ENCODE measurements at regions of chr17 and their contacts with region 1.

Region 1: DNA sequence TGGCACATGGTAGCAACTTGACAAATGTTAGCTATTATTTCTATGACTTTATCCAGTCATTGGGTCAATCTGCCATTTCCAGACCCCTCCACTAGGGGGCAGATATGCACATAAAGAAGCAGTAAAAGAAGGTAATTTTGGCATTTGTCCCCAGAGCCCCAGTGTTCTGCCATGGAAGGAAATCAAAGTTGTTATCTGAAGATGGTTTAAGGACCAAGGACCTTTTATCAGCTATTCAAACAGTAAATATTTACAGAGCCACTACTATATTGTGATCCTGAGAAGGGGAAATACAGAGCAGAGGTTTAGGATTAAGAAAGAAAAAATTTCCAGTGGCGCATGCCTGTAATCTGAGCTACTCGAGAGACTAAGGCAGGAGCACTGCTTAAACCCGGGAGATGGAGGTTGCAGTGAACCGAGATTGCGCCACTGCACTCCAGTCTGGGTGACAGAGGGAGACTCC is 20.0 kb downstream of the TRAF4 start:
- DNase-seq: peak; percentile 31 to 84 (median 70)
- ATAC-seq: peak; percentile 61 to 82 (median 75)
- H3K4me3 ChIP-seq: no peak overlapping the region
- H3K4me3 Mint-ChIP-seq: no peak overlapping the region
- H3K27ac ChIP-seq: no peak overlapping the region
- H3K27ac Mint-ChIP-seq: peak overlapping the region; percentile 53 to 73
- H3K4me1 ChIP-seq: no peaks in the 10 kb centered on the region
- H3K4me1 Mint-ChIP-seq: peaks cover 3 to 6% (median 4%) of the 10 kb centered on the region in 3 donors
- H3K27me3 ChIP-seq: no peaks in the 10 kb centered on the region
- H3K27me3 Mint-ChIP-seq: no peaks in the 10 kb centered on the region

Region 2: GRCh38 chr17:28720247-28720996 is 43.4 kb before region 1 on chr17:
- CTCF ChIA-PET with region 1: interaction called in 1 of 2 experiments, 11 read pairs
- POLR2A ChIA-PET with region 1: interaction called in 1 of 2 experiments, 5 read pairs
- DNase-seq: peak in 2 of 35 experiments; percentile 23 to 54
- ATAC-seq: no peak
- H3K4me3 ChIP-seq: peak overlapping the region; percentile 77 to 86
- H3K4me3 Mint-ChIP-seq: peak overlapping the region; percentile 97 to 99 (median 98)
- H3K27ac ChIP-seq: peak overlapping the region; percentile 75
- H3K27ac Mint-ChIP-seq: peak overlapping the region; percentile 97 to 98
- H3K4me1 ChIP-seq: peaks cover 21 to 64% of the 10 kb centered on the region in 2 experiments
- H3K4me1 Mint-ChIP-seq: peaks cover 61 to 64% (median 62%) of the 10 kb centered on the region in 3 donors
- H3K27me3 ChIP-seq: peaks cover 0 to 29% of the 10 kb centered on the region in 2 experiments
- H3K27me3 Mint-ChIP-seq: peaks cover 3 to 23% of the 10 kb centered on the region in 2 donors

Region 3: DNA sequence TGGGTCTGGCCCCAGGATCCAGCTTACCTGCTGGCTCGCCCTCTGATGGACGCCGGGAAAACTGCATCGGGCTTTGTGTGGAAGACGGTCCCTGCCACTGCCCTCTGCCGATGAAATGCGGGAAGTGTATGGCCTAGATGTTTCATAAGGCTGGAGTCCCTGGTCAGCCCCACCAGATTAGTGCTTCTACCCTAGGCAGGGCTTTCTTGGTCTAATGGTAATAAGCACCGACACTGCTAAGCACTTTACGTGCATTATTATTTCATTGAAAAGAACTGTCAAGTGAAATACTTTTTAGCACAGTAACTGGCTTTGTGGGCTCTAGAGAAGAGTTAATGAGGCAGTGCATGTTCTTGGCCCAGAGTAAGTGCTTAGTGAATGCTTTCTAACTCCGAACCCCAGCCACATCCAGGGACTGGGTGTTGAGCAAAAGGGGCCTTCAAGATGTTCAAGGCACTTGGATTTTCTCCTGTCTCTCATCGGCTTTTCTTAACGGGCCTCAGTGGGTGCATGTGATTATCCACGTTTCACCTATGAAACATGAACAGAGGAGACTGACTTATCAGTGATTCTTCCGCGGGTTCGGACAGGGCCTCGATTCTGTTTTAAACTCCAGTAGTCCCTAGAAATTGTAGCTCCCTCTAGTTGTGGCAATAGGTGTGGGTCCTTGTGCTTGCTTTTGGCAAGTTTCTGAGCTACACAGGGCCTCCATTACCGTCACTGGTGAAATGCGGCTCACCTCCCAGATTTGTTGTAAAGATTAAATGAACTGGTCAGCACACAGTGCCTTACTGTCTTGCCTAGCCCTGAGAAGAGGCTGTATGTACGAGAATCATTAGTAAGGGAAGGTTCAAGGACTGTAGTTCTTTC is 13.4 kb before region 1 on chr17:
- CTCF ChIA-PET with region 1: interaction called, 4 to 10 read pairs
- POLR2A ChIA-PET with region 1: interaction called in 1 of 2 experiments, 4 read pairs
- DNase-seq: peak; percentile 66 to 94 (median 83)
- ATAC-seq: peak; percentile 82 to 92 (median 86)
- H3K4me3 ChIP-seq: no peak overlapping the region
- H3K4me3 Mint-ChIP-seq: no peak overlapping the region
- H3K27ac ChIP-seq: no peak overlapping the region
- H3K27ac Mint-ChIP-seq: peak overlapping the region in 1 of 2 donors; percentile 58
- H3K4me1 ChIP-seq: peaks cover 9 to 25% of the 10 kb centered on the region in 2 experiments
- H3K4me1 Mint-ChIP-seq: peaks cover 5 to 20% (median 20%) of the 10 kb centered on the region in 3 donors
- H3K27me3 ChIP-seq: no peaks in the 10 kb centered on the region
- H3K27me3 Mint-ChIP-seq: no peaks in the 10 kb centered on the region

Region 4: GRCh38 chr17:28842282-28843012 is 78.6 kb after region 1 on chr17 and contains the start of gene FAM222B:
- CTCF ChIA-PET with region 1: interaction called, 3 to 16 read pairs
- POLR2A ChIA-PET with region 1: no interaction called
- DNase-seq: peak; percentile 70 to 91 (median 79)
- ATAC-seq: peak; percentile 97 to 98 (median 98)
- H3K4me3 ChIP-seq: peak within 1 kb of the TSS; percentile 95 to 96
- H3K4me3 Mint-ChIP-seq: peak within 1 kb of the TSS; percentile 93 to 99 (median 97)
- H3K27ac ChIP-seq: peak within 1 kb of the TSS; percentile 67
- H3K27ac Mint-ChIP-seq: peak within 1 kb of the TSS; percentile 91 to 95
- H3K4me1 ChIP-seq: peaks cover 9 to 31% of the 10 kb centered on the region in 2 experiments
- H3K4me1 Mint-ChIP-seq: peaks cover 14 to 26% (median 25%) of the 10 kb centered on the region in 3 donors
- H3K27me3 ChIP-seq: no peaks in the 10 kb centered on the region
- H3K27me3 Mint-ChIP-seq: no peaks in the 10 kb centered on the region
- total RNA-seq, gene FAM222B: 17.6 to 23.4 (median 23.3) TPM

Region 5: GRCh38 chr17:28902819-28903545 is 139.1 kb after region 1 on chr17 and contains the start of gene DHRS13:
- CTCF ChIA-PET with region 1: interaction called, 5 to 22 read pairs
- POLR2A ChIA-PET with region 1: no interaction called
- DNase-seq: peak; percentile 88 to 99 (median 93)
- ATAC-seq: peak; percentile 86 to 93 (median 89)
- H3K4me3 ChIP-seq: peak within 1 kb of the TSS; percentile 55 to 76
- H3K4me3 Mint-ChIP-seq: peak within 1 kb of the TSS; percentile 88 to 94 (median 89)
- H3K27ac ChIP-seq: peak within 1 kb of the TSS; percentile 62
- H3K27ac Mint-ChIP-seq: peak within 1 kb of the TSS; percentile 92 to 93
- H3K4me1 ChIP-seq: peaks cover 7 to 34% of the 10 kb centered on the region in 2 experiments
- H3K4me1 Mint-ChIP-seq: peaks cover 38 to 42% (median 42%) of the 10 kb centered on the region in 3 donors
- H3K27me3 ChIP-seq: no peaks in the 10 kb centered on the region
- H3K27me3 Mint-ChIP-seq: no peaks in the 10 kb centered on the region
- total RNA-seq, gene DHRS13: 23.1 to 44.9 (median 39.7) TPM

Measured in T-cell (primary cell).